HCT116 (cell line): ENCODE measurements at regions of chr1 and their contacts with region 1.

Region 1: GRCh38 chr1:46527474-46528296 is 23.8 kb downstream of the KNCN start:
- DNase-seq: peak; percentile 54
- ATAC-seq: peak; percentile 92
- H3K4me3 ChIP-seq: no peak overlapping the region
- H3K27ac ChIP-seq: no peak overlapping the region
- H3K4me1 ChIP-seq: peaks cover 3 to 11% of the 10 kb centered on the region in 2 experiments; a peak in 3 of 4 replicates
- H3K27me3 ChIP-seq: no peaks in the 10 kb centered on the region
- CTCF ChIP-seq: peak; percentile 90 to 98 (median 93)
- POLR2A ChIP-seq: no peak
- RAD21 ChIP-seq: peak; percentile 100

Region 2: DNA sequence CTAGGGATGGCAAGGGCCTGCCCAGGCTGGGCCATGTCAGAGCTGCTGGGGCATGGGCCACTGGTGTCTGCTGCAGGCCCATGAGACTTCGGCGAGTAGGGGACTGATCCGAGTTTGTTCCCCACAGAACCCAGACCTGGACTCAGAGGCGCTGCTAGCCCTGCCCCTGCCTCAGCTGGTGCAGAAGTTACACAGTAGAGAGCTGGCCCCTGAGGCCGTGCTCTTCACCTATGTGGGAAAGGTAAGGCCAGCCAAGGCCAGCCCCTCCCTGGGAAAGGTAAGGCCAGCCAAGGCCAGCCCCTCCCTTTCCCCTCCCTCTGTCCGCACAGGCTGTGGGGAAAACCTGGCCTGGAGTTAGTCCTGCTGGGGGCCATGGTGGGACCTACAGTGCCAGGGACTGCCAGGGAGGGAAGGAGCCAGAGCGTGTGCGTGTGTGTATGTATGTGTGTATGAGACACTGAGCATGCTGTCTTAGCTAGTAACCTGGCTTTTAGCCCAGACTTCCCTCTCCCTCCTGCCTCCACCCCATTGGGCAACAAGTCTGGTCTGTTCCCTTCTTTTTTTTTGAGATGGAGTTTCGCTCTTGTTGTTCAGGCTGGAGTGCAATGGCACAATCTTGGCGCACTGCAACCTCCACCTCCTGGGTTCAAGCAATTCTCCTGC is 125.6 kb before region 1 on chr1:
- CTCF ChIA-PET with region 1: no interaction called
- POLR2A ChIA-PET with region 1: no interaction called
- RAD21 ChIA-PET with region 1: interaction called in 1 of 2 experiments, 3 read pairs
- intact Hi-C with region 1: loop called (anchors 1 kb)
- DNase-seq: peak; percentile 43
- ATAC-seq: peak; percentile 90
- H3K4me3 ChIP-seq: peak overlapping the region in 1 of 2 experiments; percentile 20; a peak in 1 of 4 replicates
- H3K27ac ChIP-seq: no peak overlapping the region
- H3K4me1 ChIP-seq: peaks cover 8 to 18% of the 10 kb centered on the region in 2 experiments; a peak in 3 of 4 replicates
- H3K27me3 ChIP-seq: no peaks in the 10 kb centered on the region
- CTCF ChIP-seq: no peak
- POLR2A ChIP-seq: no peak
- RAD21 ChIP-seq: no peak

Region 3: GRCh38 chr1:46442317-46443161 is 85.1 kb before region 1 on chr1:
- CTCF ChIA-PET with region 1: interaction called, 67 read pairs
- POLR2A ChIA-PET with region 1: interaction called, 3 read pairs
- RAD21 ChIA-PET with region 1: interaction called, 4 to 5 read pairs
- intact Hi-C with region 1: loop called (anchors 1 kb)
- DNase-seq: peak; percentile 96
- ATAC-seq: peak; percentile 88
- H3K4me3 ChIP-seq: peak overlapping the region; percentile 60 to 63
- H3K27ac ChIP-seq: peak overlapping the region; percentile 66
- H3K4me1 ChIP-seq: peaks cover 0 to 16% of the 10 kb centered on the region in 2 experiments; a peak in 2 of 4 replicates
- H3K27me3 ChIP-seq: no peaks in the 10 kb centered on the region
- CTCF ChIP-seq: peak; percentile 85 to 94 (median 91)
- POLR2A ChIP-seq: peak; percentile 61
- RAD21 ChIP-seq: peak; percentile 80

Region 4: DNA sequence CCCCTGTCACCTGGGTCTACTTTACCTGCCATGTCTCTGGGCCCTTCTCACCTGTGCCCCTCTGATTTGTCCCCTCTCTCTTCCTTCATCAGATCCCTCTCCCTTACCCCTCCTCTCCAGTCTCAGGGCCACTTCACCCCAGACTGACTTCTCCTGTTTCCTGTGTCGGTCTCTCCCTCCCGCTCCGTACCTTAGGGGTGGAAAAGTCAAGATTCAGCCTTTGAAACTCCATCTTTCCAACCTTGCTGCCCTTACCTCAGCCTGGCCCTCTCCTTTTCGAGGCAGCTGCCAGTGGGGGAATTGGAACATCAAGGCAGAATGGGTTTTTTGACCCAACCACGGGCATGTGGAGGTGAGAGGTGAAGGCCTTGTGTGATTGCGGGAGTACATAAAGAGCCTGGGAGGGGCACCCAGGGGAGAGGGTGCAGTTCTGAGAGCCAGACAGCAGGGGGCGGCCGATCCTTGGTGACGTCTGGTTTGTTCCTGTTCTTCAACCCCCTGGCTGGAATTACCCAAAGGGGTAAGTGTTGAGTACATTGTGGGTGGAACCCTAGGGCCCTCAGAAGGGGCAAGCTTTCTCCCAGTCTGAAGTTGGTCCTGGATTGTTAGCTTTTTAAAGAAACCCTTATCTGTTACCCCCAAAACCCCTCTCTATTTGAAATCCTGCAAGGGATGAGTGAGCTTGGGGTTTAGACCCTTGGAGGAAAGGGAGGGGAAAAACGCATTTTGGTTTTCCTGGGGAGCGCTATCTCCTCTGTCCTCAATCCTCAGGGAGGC is 50.3 kb before region 1 on chr1:
- CTCF ChIA-PET with region 1: interaction called, 9 read pairs
- POLR2A ChIA-PET with region 1: no interaction called
- RAD21 ChIA-PET with region 1: interaction called in 1 of 2 experiments, 3 read pairs
- intact Hi-C with region 1: loop called (anchors 1 kb)
- DNase-seq: peak; percentile 41
- ATAC-seq: peak; percentile 96
- H3K4me3 ChIP-seq: no peak overlapping the region
- H3K27ac ChIP-seq: no peak overlapping the region
- H3K4me1 ChIP-seq: peaks cover 0 to 4% of the 10 kb centered on the region in 2 experiments; a peak in 2 of 4 replicates
- H3K27me3 ChIP-seq: no peaks in the 10 kb centered on the region
- CTCF ChIP-seq: peak; percentile 89 to 95 (median 89)
- POLR2A ChIP-seq: no peak
- RAD21 ChIP-seq: peak; percentile 94

Region 5: GRCh38 chr1:46487818-46488218 is 39.9 kb before region 1 on chr1:
- CTCF ChIA-PET with region 1: interaction called, 15 read pairs
- POLR2A ChIA-PET with region 1: no interaction called
- RAD21 ChIA-PET with region 1: interaction called, 3 read pairs
- intact Hi-C with region 1: no loop called
- DNase-seq: no peak
- ATAC-seq: no peak
- H3K4me3 ChIP-seq: no peak overlapping the region
- H3K27ac ChIP-seq: no peak overlapping the region
- H3K4me1 ChIP-seq: peaks cover 6 to 20% of the 10 kb centered on the region in 2 experiments; a peak in 3 of 4 replicates
- H3K27me3 ChIP-seq: no peaks in the 10 kb centered on the region
- CTCF ChIP-seq: peak; percentile 39 to 63 (median 54); a peak in 5 of 6 replicates
- POLR2A ChIP-seq: no peak
- RAD21 ChIP-seq: no peak